Aorta (tissue), 5 donors: ENCODE measurements at regions of chr6 and their contacts with region 1.

Region 1: GRCh38 chr6:96521644-96522464 is at the start of gene UFL1:
- DNase-seq: peak; percentile 96 to 98
- ATAC-seq: peak; percentile 99
- H3K4me3 ChIP-seq: peak within 1 kb of the TSS; percentile 87 to 90
- H3K27ac ChIP-seq: peak within 1 kb of the TSS; percentile 68 to 98
- H3K4me1 ChIP-seq: peaks cover 3 to 4% of the 10 kb centered on the region in 2 donors
- H3K27me3 ChIP-seq: no peaks in the 10 kb centered on the region
- total RNA-seq, gene UFL1: 25.3 to 26.9 TPM

Region 2: DNA sequence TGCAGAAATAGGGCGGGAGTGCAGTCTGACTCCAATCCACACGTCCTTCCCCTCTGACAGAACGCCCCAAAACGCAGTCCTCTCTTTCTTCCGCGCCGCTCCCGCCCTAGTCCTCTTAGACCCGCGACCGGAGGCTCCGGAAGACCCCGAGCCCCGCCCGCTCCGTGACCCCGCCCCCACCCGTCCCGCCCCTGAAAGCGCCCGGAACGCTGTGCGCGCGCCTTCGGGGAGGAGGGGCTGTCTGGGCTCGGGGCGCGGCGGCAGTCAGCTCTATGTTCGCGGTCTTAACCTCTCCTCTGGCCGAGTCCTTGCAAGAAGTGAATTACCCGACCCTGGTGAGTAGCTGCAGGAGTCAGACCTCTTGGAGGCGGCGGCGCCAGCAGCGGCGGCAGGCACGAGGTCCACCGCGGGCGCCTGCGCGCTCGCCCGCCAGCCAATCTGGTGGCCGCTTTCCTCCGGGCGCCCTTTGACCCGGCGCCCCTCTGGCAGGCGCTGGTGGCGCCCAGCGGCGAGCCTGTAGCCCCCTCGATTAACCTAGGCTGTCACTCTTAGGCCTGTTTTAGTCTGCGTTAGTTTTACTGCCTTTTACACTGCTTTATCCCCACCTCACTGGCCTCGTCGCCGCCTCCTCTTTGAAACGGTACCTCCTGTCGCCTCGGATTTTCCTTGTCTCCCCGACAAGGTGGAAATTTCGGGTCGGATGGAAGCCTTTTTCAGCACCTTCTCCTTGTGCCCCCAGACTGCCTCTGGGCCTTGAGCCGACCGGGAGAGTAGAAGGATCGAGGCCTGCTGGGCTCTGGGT is 944.3 kb before region 1 on chr6 and contains the start of gene MANEA:
- intact Hi-C with region 1: loop called in 1 of 2 experiments (anchors 5 kb)
- DNase-seq: peak; percentile 88 to 93
- ATAC-seq: peak; percentile 96
- H3K4me3 ChIP-seq: peak within 1 kb of the TSS; percentile 54 to 90
- H3K27ac ChIP-seq: peak within 1 kb of the TSS; percentile 78 to 89
- H3K4me1 ChIP-seq: no peaks in the 10 kb centered on the region
- H3K27me3 ChIP-seq: no peaks in the 10 kb centered on the region
- total RNA-seq, gene MANEA: 10.8 to 12.8 TPM

Region 3: GRCh38 chr6:96743496-96743895 is 221.6 kb after region 1 on chr6:
- intact Hi-C with region 1: no loop called
- DNase-seq: no peak
- ATAC-seq: no peak
- H3K4me3 ChIP-seq: no peak overlapping the region
- H3K27ac ChIP-seq: no peak overlapping the region
- H3K4me1 ChIP-seq: no peaks in the 10 kb centered on the region
- H3K27me3 ChIP-seq: no peaks in the 10 kb centered on the region

Region 4: GRCh38 chr6:96853083-96853482 is 331.2 kb after region 1 on chr6:
- intact Hi-C with region 1: no loop called
- DNase-seq: no peak
- ATAC-seq: no peak
- H3K4me3 ChIP-seq: no peak overlapping the region
- H3K27ac ChIP-seq: no peak overlapping the region
- H3K4me1 ChIP-seq: no peaks in the 10 kb centered on the region
- H3K27me3 ChIP-seq: no peaks in the 10 kb centered on the region

Region 5: DNA sequence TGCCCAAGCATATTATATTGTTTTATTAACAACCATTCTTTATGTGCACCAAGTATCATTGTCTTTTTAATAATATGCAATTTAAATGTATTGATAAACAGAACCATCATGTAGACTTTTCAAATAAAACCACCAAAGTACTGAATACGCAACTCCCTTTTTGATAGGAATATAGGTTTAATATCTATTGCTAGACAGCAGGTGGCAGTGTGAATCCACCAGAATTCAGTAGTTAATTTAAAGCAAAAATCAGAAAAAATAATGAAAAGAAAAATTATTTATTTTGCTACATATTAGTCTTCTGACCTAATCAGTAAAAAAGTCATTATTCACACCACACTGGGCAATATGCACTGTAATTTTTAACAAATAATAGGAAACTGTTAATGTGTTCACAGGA is 546.4 kb after region 1 on chr6:
- intact Hi-C with region 1: loop called in 1 of 2 experiments (anchors 10 kb)
- DNase-seq: no peak
- ATAC-seq: no peak
- H3K4me3 ChIP-seq: no peak overlapping the region
- H3K27ac ChIP-seq: no peak overlapping the region
- H3K4me1 ChIP-seq: no peaks in the 10 kb centered on the region
- H3K27me3 ChIP-seq: no peaks in the 10 kb centered on the region

Region 6: DNA sequence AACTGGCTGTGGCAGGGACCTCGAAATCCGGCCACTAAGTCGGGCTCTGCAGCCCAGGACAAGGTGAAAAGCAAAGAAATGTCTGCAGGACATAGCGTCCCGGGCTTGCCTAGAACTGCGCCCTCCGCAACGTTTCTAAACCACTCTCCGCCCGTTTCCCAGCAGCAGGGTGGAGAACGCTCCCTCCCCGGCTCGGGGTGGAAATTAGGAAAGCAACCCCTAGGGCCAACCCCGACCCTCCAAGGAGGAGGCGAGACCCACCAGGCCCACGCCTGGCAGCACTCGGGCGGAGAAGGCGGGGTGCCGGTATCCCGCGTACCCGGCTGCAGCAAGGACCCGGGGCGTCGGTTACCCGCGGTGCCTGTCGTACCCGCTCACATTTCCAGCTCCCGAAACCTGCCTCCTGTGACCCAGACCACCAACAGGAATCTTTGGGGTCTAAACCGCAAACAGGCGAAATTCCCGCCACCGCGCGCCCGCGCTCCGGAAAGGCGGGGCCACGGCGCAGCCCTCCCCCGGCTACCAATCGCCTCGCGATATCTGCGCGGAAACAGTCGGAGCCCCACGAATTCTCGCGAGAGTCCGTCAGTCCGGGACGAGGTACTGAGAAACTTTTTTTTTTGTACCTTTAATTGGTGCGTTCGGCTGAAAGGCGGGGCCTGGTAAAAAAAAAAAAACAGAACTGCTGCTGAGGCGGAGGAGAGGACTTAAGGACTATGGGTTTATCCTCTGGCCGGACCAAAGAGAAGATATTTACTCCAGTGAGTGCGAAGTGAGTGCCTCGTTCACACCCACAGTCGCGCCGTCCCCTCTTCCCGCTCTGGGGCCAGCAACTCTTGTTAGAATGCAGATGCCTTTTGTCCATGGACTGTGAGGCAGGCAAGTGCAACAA is 761.1 kb after region 1 on chr6 and contains the start of gene MMS22L:
- intact Hi-C with region 1: loop called in 1 of 2 experiments (anchors 5 kb)
- DNase-seq: peak; percentile 97 to 99
- ATAC-seq: peak; percentile 100
- H3K4me3 ChIP-seq: peak within 1 kb of the TSS; percentile 51 to 86
- H3K27ac ChIP-seq: peak within 1 kb of the TSS in 1 of 2 donors; percentile 10
- H3K4me1 ChIP-seq: no peaks in the 10 kb centered on the region
- H3K27me3 ChIP-seq: no peaks in the 10 kb centered on the region
- total RNA-seq, gene MMS22L: 6.6 to 10.8 TPM